AG04449 (cell line): ENCODE measurements at regions of chr4 and their contacts with region 1.

Region 1: GRCh38 chr4:168923526-168924194 is 86.4 kb downstream of the CBR4 start:
- DNase-seq: peak; percentile 42
- H3K4me3 ChIP-seq: no peak overlapping the region
- CTCF ChIP-seq: peak; percentile 78

Region 2: GRCh38 chr4:168585168-168586091 is 338.2 kb before region 1 on chr4:
- CTCF ChIA-PET with region 1: interaction called, 31 read pairs
- POLR2A ChIA-PET with region 1: no interaction called
- DNase-seq: no peak
- H3K4me3 ChIP-seq: no peak overlapping the region
- CTCF ChIP-seq: peak; percentile 79

Region 3: DNA sequence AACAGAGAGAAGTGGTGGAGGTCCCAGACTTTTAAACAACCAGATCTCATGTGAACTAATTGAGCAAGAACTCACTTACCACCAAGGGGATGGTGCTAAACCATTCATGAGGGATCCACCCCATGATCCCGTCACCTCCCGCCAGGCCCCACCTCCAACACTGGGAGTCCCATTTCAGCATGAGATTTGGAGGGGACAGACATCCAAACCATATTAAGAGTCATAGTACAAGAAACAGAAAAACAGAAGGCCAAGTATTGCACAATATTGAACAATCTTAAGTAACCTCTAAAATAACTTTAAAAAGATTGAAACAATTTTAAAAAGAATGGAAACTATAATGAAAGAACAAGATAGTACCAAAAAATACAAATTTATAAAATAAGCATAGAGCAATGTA is 23.6 kb before region 1 on chr4:
- CTCF ChIA-PET with region 1: interaction called, 12 read pairs
- POLR2A ChIA-PET with region 1: no interaction called
- DNase-seq: no peak
- H3K4me3 ChIP-seq: no peak overlapping the region
- CTCF ChIP-seq: no peak

Region 4: GRCh38 chr4:168995537-168996295 is 72.1 kb after region 1 on chr4:
- CTCF ChIA-PET with region 1: interaction called, 22 read pairs
- POLR2A ChIA-PET with region 1: no interaction called
- DNase-seq: no peak
- H3K4me3 ChIP-seq: no peak overlapping the region
- CTCF ChIP-seq: peak; percentile 20

Region 5: GRCh38 chr4:169492438-169493163 is 568.9 kb after region 1 on chr4:
- CTCF ChIA-PET with region 1: interaction called, 115 read pairs
- POLR2A ChIA-PET with region 1: no interaction called
- DNase-seq: no peak
- H3K4me3 ChIP-seq: no peak overlapping the region
- CTCF ChIP-seq: peak; percentile 67